Right ventricle myocardium inferior (tissue), 1 donor: ENCODE measurements at regions of chr15 and their contacts with region 1.

Region 1: DNA sequence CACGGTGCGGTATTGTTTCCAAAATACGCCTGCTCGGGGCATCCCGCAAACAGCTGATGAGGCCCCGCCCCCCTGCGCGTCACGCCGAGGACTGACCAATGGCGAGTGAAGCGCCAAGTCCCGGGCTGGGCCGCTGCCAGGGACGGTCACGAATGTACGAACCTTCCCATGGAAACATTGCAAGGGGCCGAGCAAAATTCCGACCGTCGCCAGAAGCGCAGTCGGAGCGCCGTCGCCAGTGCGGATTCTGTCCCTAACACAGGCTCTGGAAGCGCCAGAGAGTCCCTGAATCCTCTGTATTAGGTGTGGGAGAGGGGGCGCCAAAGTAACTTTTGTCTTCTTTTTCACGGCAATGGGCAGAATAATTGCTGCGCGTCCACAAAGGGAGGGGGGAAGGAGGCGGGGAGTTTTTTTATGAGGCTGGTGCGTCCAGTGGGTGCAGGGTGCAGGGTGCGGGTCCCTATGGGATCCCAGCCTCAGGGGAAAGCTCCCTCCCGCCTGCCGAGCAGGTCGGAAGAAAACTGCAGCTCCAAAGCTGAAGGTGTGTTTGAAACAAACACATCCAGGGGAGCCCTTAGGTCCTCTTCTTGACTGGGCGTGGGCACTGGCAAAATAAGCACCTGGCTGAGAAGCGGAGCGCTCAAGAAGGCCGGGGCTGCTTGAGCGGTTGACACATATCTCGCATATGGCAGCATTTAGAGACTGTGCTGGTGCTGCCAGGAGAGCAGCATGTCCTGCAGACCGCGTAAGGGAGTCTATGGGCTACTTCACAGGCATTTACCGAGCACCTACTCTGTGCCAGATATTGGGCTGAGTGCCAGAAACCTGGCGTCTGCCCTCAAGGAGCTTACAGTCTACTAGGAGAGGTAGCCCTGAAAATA is at the start of gene BMF:
- DNase-seq: peak; percentile 100
- ATAC-seq: peak; percentile 80
- total RNA-seq, gene BMF: 3.2 TPM

Region 2: GRCh38 chr15:40054605-40055545 is 54.2 kb before region 1 on chr15:
- intact Hi-C with region 1: loop called (anchors 5 kb)
- DNase-seq: no peak
- ATAC-seq: peak; percentile 8

Region 3: DNA sequence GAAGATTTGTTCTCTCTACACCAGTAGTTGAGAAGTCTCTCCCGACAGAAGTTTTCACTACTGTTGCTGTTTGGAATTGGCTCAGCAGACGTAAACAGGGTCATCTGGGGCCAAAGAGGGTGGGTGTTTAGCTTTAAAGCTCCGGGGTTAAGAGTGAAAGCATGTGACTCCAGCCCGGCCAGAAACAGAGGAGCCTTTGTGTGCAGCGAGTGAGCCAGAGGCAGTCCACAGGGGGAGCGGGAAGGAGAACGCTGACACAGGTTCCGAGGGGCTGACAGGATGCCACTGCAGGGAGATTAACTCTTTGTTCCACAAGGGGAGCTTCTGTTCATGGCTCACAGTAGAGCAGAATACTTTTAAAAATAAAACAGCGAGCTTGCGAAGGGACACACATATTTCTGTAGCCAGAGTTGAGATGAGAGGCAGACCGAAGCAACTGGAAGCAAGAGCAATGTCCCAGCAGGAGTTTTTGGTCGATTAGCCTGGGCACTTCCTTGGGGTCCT is 27.4 kb before region 1 on chr15:
- intact Hi-C with region 1: no loop called
- DNase-seq: peak; percentile 87
- ATAC-seq: peak; percentile 96

Region 4: GRCh38 chr15:40160689-40161688 is 51.9 kb after region 1 on chr15 and contains the start of gene BUB1B:
- intact Hi-C with region 1: loop called (anchors 5 kb)
- DNase-seq: peak; percentile 93
- ATAC-seq: peak; percentile 96
- total RNA-seq, gene BUB1B: 2.4 TPM